Cardiac septum (tissue), 1 donor: ENCODE measurements at regions of chr13 and their contacts with region 1.

Region 1: GRCh38 chr13:51729866-51730546 is 74.0 kb downstream of the DHRS12 start:
- DNase-seq: no peak

Region 2: GRCh38 chr13:51452361-51453206 is 277.4 kb before region 1 on chr13 and contains the start of gene INTS6:
- intact Hi-C with region 1: loop called (anchors 5 kb)
- DNase-seq: peak; percentile 100
- total RNA-seq, gene INTS6: 32.9 TPM